CD14-positive monocyte (primary cell): ENCODE measurements at regions of chr10 and their contacts with region 1.

Region 1: GRCh38 chr10:102904346-102904745 is 13.7 kb upstream of the CNNM2 start:
- DNase-seq: no peak
- H3K4me3 ChIP-seq: no peak overlapping the region
- H3K4me3 Mint-ChIP-seq: no peak overlapping the region
- H3K27ac ChIP-seq: no peak overlapping the region
- H3K27ac Mint-ChIP-seq: peak overlapping the region in 1 of 7 donors; percentile 11
- H3K4me1 ChIP-seq: no peaks in the 10 kb centered on the region
- H3K4me1 Mint-ChIP-seq: no peaks in the 10 kb centered on the region
- H3K27me3 ChIP-seq: no peaks in the 10 kb centered on the region
- H3K27me3 Mint-ChIP-seq: peaks cover 0 to 8% (median 1%) of the 10 kb centered on the region in 3 donors
- CTCF ChIP-seq: no peak

Region 2: DNA sequence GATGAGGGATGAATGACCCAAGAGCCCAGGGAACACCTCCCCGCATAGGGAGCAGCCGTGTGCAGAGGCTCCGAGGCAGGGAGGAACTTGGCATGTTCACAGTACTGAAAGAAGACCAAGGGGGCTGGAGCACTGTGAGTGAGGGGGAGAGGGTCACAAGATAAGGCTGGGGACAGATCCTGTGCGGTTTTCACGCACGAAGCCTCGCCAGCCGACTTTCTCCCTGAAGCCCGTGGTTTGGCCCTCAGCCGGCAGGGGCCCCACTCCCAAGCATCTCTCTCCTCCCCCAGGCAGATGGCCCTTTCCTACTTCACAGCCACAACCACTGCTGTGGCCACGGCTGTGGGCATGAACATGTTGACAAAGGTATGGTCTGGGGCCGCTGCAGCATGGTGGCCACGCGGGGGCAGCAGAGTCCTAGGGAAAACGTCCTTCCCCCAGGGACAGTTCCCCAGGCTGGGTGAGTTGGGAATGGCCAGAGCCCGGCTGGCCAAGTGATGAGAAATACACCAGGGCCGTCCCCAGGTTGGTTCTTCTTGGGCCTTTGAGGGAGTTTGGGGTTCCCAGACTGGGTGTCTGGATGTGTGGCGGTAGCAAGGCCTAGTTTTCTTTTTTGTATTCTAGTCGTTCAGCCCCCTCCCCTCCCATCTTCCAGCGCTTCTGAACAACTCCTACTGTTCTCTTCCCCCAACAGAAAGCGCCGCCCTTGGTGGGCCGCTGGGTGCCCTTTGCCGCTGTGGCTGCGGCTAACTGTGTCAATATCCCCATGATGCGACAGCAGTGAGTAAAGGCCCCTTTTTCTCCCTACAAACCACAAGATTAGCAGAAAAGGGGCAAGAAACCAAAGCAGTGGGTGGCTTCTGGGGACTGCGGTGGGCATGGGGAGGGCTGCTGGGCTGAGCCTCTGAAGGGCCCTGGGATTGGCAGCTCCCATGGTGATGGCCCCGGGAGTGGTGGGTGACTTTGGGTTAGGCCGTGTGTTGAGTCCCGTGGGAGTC is 175.0 kb before region 1 on chr10:
- intact Hi-C with region 1: loop called (anchors 1 to 2 kb)
- DNase-seq: peak; percentile 72 to 81 (median 79)
- H3K4me3 ChIP-seq: no peak overlapping the region
- H3K4me3 Mint-ChIP-seq: peak overlapping the region in 1 of 2 donors; percentile 45
- H3K27ac ChIP-seq: peak overlapping the region in 1 of 2 donors; percentile 31
- H3K27ac Mint-ChIP-seq: peak overlapping the region in 3 of 7 donors; percentile 22 to 60 (median 24)
- H3K4me1 ChIP-seq: no peaks in the 10 kb centered on the region
- H3K4me1 Mint-ChIP-seq: peaks cover 20% of the 10 kb centered on the region
- H3K27me3 ChIP-seq: no peaks in the 10 kb centered on the region
- H3K27me3 Mint-ChIP-seq: peaks cover 0 to 2% (median 2%) of the 10 kb centered on the region in 3 donors
- CTCF ChIP-seq: peak; percentile 88

Region 3: GRCh38 chr10:102835007-102835482 is 69.3 kb before region 1 on chr10:
- intact Hi-C with region 1: loop called (anchors 2 kb)
- DNase-seq: peak; percentile 73 to 88 (median 79)
- H3K4me3 ChIP-seq: no peak overlapping the region
- H3K4me3 Mint-ChIP-seq: no peak overlapping the region
- H3K27ac ChIP-seq: no peak overlapping the region
- H3K27ac Mint-ChIP-seq: peak overlapping the region in 2 of 7 donors; percentile 44 to 51
- H3K4me1 ChIP-seq: no peaks in the 10 kb centered on the region
- H3K4me1 Mint-ChIP-seq: peaks cover 11% of the 10 kb centered on the region
- H3K27me3 ChIP-seq: no peaks in the 10 kb centered on the region
- H3K27me3 Mint-ChIP-seq: peaks cover 2 to 4% (median 3%) of the 10 kb centered on the region in 3 donors
- CTCF ChIP-seq: peak; percentile 88

Region 4: DNA sequence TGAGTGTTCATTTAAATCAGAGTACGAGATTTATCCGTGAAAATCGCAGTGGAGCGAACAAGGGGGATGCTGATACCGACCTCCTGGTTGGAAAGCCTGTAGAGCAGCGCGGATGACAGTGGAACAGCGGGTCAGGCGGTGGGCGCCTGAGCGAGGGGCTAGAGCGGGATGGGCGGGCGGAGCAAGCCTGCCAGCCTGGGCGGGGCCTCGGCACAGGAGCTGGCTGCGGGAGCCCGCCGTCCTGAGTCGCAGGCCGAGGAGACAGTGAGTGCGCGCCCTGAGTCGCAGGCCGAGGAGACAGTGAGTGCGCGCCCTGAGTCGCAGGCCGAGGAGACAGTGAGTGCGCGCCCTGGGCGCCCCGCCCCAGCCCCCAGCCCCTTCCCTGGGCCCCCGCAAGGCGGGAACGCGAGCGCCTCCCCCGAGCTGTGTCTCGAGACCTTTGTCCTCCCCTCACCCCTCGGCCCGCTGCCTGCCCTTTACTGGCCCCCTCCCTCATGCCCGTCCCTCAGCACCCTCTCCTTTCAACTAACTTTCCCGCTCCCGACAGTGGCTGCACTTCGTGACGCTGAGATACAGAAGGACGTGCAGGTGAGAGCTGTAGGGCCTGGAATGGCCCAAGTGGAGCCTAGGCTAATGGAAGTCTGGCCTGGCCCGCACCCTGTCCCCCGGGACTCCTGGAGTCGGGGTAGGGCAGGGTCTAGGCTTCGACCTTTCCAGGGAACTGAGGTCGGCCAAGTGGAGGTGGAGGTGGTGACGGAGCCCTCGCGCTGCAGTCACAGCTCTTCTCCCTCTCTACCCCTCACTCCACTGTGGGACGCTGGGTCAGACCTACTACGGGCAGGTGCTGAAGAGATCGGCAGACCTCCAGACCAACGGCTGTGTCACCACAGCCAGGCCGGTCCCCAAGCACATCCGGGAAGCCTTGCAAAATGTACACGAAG is 34.8 kb before region 1 on chr10 and contains the start of gene AS3MT:
- intact Hi-C with region 1: no loop called
- DNase-seq: no peak
- H3K4me3 ChIP-seq: no peak within 1 kb of the TSS
- H3K4me3 Mint-ChIP-seq: peak within 1 kb of the TSS; percentile 1 to 80
- H3K27ac ChIP-seq: no peak within 1 kb of the TSS
- H3K27ac Mint-ChIP-seq: no peak within 1 kb of the TSS
- H3K4me1 ChIP-seq: peaks cover 5 to 8% of the 10 kb centered on the region in 2 donors
- H3K4me1 Mint-ChIP-seq: peaks cover 16% of the 10 kb centered on the region
- H3K27me3 ChIP-seq: peaks cover 24 to 33% of the 10 kb centered on the region in 2 donors
- H3K27me3 Mint-ChIP-seq: peaks cover 24 to 41% (median 32%) of the 10 kb centered on the region in 3 donors
- CTCF ChIP-seq: no peak
- polyA plus RNA-seq, gene AS3MT: 0.09 to 0.45 TPM in 2 of 3 donors, not detected in the other

Region 5: GRCh38 chr10:103111031-103111917 is 206.9 kb after region 1 on chr10:
- intact Hi-C with region 1: no loop called
- DNase-seq: no peak
- H3K4me3 ChIP-seq: no peak overlapping the region
- H3K4me3 Mint-ChIP-seq: no peak overlapping the region
- H3K27ac ChIP-seq: peak overlapping the region in 1 of 2 donors; percentile 48
- H3K27ac Mint-ChIP-seq: peak overlapping the region in 3 of 7 donors; percentile 1 to 65 (median 38)
- H3K4me1 ChIP-seq: peaks cover 4 to 9% of the 10 kb centered on the region in 2 donors
- H3K4me1 Mint-ChIP-seq: peaks cover 28% of the 10 kb centered on the region
- H3K27me3 ChIP-seq: no peaks in the 10 kb centered on the region
- H3K27me3 Mint-ChIP-seq: no peaks in the 10 kb centered on the region
- CTCF ChIP-seq: no peak